ENCODE measurements at regions of chr15 and their contacts with region 1.

Region 1: GRCh38 chr15:77496710-77497103 is 76.0 kb downstream of the HMG20A start:
- DNase-seq: peak; percentile 93 to 95
- ATAC-seq: peak; percentile 96
- H3K4me3 ChIP-seq: no peak overlapping the region
- H3K27ac ChIP-seq: peak overlapping the region in 1 of 2 donors; percentile 81
- H3K4me1 ChIP-seq: no peaks in the 10 kb centered on the region
- H3K27me3 ChIP-seq: no peaks in the 10 kb centered on the region

Region 2: GRCh38 chr15:76939715-76940114 is 557.0 kb before region 1 on chr15:
- intact Hi-C with region 1: loop called in 1 of 2 experiments (anchors 10 kb)
- DNase-seq: no peak
- ATAC-seq: no peak
- H3K4me3 ChIP-seq: no peak overlapping the region
- H3K27ac ChIP-seq: no peak overlapping the region
- H3K4me1 ChIP-seq: no peaks in the 10 kb centered on the region
- H3K27me3 ChIP-seq: no peaks in the 10 kb centered on the region

Region 3: GRCh38 chr15:76973362-76973743 is 523.4 kb before region 1 on chr15:
- intact Hi-C with region 1: loop called in 1 of 2 experiments (anchors 10 kb)
- DNase-seq: peak; percentile 82
- ATAC-seq: peak; percentile 63
- H3K4me3 ChIP-seq: no peak overlapping the region
- H3K27ac ChIP-seq: peak overlapping the region; percentile 81 to 86
- H3K4me1 ChIP-seq: peaks cover 0 to 6% of the 10 kb centered on the region in 2 donors
- H3K27me3 ChIP-seq: no peaks in the 10 kb centered on the region

Region 4: DNA sequence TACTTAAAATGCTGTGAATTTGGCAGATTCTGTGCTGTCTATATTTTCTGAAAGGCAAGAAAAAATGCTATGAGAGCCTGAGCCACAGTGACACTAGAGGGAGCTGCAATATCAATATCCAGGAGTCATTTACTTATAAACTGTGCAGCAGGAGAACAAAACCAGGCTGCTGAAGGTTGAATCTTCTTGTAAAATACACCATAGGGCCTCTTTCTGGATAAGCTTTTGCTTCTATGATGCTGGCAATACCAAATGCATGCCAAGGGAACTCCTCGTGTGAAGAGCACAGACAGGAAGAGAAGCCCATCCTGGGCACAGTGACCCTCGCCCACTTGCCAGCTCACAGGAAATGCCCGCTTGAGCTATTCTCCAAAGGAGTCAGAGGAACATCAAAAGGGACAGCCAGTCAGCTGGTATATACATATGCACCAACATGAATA is 377.8 kb before region 1 on chr15:
- intact Hi-C with region 1: loop called in 1 of 2 experiments (anchors 2 kb)
- DNase-seq: no peak
- ATAC-seq: peak; percentile 39
- H3K4me3 ChIP-seq: no peak overlapping the region
- H3K27ac ChIP-seq: no peak overlapping the region
- H3K4me1 ChIP-seq: no peaks in the 10 kb centered on the region
- H3K27me3 ChIP-seq: no peaks in the 10 kb centered on the region

Region 5: DNA sequence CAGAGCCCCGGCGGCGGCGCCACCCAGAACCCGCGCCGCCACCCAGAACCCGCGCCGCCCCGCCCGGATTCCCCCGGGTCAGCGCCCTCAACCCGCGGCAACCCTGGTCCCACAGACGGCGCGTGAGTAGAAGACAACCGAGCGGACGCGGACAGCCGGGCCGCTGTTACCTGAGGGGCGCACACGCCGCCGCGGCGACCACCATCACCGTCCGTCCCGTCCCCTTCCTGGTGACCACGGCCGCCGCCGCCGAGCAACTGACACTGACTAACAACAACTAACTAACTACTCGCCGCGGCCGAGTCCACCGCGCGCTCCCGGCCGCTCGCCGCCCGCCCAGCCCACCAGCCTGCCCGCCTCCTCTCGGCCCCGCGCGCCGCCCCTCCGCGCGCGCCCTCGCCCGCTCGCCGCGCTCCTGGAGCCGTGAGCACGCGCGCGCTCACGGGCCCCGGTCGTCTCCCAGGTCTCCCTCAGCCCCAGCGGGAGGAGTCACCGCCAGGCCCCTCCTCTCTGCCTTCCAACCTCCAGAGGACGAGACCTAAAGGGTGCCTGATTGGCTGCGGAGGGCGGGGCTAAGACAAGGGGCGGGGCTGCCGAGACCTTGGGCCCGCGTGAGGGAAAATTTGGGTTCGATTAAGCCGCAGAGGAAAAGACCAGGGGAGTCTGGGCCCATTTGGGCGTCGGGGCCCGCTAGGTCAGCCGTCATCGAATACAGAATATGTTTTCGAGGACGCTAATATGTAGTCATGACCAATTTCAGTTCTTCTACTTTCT is 76.7 kb before region 1 on chr15 and contains the start of gene PEAK1:
- intact Hi-C with region 1: loop called (anchors 2 to 5 kb)
- DNase-seq: peak; percentile 100
- ATAC-seq: peak; percentile 99
- H3K4me3 ChIP-seq: peak within 1 kb of the TSS; percentile 85 to 95
- H3K27ac ChIP-seq: peak within 1 kb of the TSS; percentile 62 to 90
- H3K4me1 ChIP-seq: peaks cover 0 to under 1% of the 10 kb centered on the region in 2 donors
- H3K27me3 ChIP-seq: no peaks in the 10 kb centered on the region
- total RNA-seq, gene PEAK1: 96.0 to 105 TPM

Region 6: GRCh38 chr15:77455696-77456321 is 40.9 kb before region 1 on chr15:
- intact Hi-C with region 1: loop called in 1 of 2 experiments (anchors 5 kb)
- DNase-seq: no peak
- ATAC-seq: peak; percentile 64
- H3K4me3 ChIP-seq: no peak overlapping the region
- H3K27ac ChIP-seq: peak overlapping the region; percentile 36 to 65
- H3K4me1 ChIP-seq: no peaks in the 10 kb centered on the region
- H3K27me3 ChIP-seq: no peaks in the 10 kb centered on the region

Region 7: GRCh38 chr15:77507911-77508310 is 11.2 kb after region 1 on chr15:
- intact Hi-C with region 1: no loop called
- DNase-seq: no peak
- ATAC-seq: peak; percentile 78
- H3K4me3 ChIP-seq: no peak overlapping the region
- H3K27ac ChIP-seq: no peak overlapping the region
- H3K4me1 ChIP-seq: peaks cover 0 to 3% of the 10 kb centered on the region in 2 donors
- H3K27me3 ChIP-seq: no peaks in the 10 kb centered on the region